Naive thymus-derived CD4-positive, alpha-beta T cell (primary cell): ENCODE measurements at regions of chr6 and their contacts with region 1.

Region 1: GRCh38 chr6:37257634-37258404 is at the starts of genes TBC1D22B and TMEM217:
- DNase-seq: peak; percentile 85 to 94 (median 93)
- ATAC-seq: peak; percentile 100
- H3K4me3 ChIP-seq: peak within 1 kb of the TSS; percentile 92
- H3K4me3 Mint-ChIP-seq: peak within 1 kb of the TSS; percentile 80 to 99 (median 90)
- H3K27ac ChIP-seq: peak within 1 kb of the TSS; percentile 87
- H3K27ac Mint-ChIP-seq: peak within 1 kb of the TSS; percentile 71 to 95 (median 88)
- H3K4me1 ChIP-seq: peaks cover 18 to 21% of the 10 kb centered on the region in 2 donors
- H3K4me1 Mint-ChIP-seq: peaks cover 30 to 58% (median 45%) of the 10 kb centered on the region in 7 donors
- H3K27me3 ChIP-seq: no peaks in the 10 kb centered on the region
- H3K27me3 Mint-ChIP-seq: no peaks in the 10 kb centered on the region
- total RNA-seq, gene TBC1D22B: 8.3 to 23.5 (median 9.5) TPM
- total RNA-seq, gene TMEM217: 0.78 to 2.8 (median 1.6) TPM in 3 of 5 experiments, not detected in the others

Region 2: DNA sequence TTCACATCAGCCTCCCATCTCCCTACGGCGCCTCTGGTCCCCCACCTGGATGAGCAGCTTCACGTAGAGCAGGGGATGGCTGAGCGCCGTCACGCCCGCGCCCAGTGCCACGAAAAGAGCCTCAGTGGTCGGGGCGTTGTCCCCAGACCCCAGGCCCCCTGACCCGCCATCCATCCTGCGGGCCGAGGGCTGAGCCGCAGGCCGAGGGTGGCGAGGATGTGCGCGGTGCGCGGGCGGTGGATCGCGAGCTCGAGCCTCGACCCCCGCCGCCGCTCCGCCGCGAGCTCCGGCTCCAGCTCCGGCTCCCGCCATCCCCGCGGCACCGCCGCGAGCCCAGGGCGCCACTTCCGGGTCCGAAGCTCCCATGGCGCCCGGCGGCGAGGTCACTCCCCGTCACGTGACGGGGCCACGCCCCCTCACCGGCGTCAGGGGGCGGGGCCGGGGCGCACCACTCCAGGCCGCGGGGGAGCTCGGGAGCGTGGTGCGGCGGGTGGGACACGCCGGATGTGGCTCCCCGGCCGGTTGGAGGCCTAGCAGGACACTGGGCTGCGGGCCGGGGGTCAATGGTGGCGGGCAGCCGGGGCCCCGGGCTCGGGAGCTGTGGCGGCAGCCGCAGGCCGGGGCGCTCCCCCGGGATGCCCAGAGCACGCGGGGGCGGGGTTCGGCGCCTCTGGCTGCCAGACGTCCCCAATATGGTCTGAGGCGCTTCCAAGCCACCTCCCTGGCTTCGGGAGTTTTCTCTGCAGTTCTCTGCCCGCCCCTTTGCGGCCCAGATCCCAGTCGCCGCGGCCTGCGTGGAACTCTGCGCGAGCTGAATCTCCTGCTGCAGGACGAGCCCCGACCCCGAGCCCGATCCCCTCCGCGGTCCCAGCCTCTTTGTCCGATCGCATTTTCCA is 271.8 kb before region 1 on chr6 and contains the start of gene MTCH1:
- CTCF ChIA-PET with region 1: no interaction called
- POLR2A ChIA-PET with region 1: interaction called, 8 read pairs
- intact Hi-C with region 1: loop called in 1 of 2 experiments (anchors 1 kb)
- DNase-seq: peak; percentile 85 to 98 (median 92)
- ATAC-seq: peak; percentile 93
- H3K4me3 ChIP-seq: peak within 1 kb of the TSS; percentile 98
- H3K4me3 Mint-ChIP-seq: peak within 1 kb of the TSS in 6 of 10 donors; percentile 98 to 100 (median 100)
- H3K27ac ChIP-seq: peak within 1 kb of the TSS; percentile 96
- H3K27ac Mint-ChIP-seq: peak within 1 kb of the TSS in 7 of 9 donors; percentile 98 to 99 (median 99)
- H3K4me1 ChIP-seq: peaks cover 22 to 27% of the 10 kb centered on the region in 2 donors
- H3K4me1 Mint-ChIP-seq: peaks cover 12 to 26% (median 18%) of the 10 kb centered on the region in 7 donors
- H3K27me3 ChIP-seq: no peaks in the 10 kb centered on the region
- H3K27me3 Mint-ChIP-seq: peaks cover 0 to 17% (median 0%) of the 10 kb centered on the region in 5 donors
- total RNA-seq, gene MTCH1: 123 to 198 (median 130) TPM

Region 3: GRCh38 chr6:36997811-36998722 is 259.8 kb before region 1 on chr6:
- CTCF ChIA-PET with region 1: no interaction called
- POLR2A ChIA-PET with region 1: no interaction called
- intact Hi-C with region 1: no loop called
- DNase-seq: no peak
- ATAC-seq: no peak
- H3K4me3 ChIP-seq: no peak overlapping the region
- H3K4me3 Mint-ChIP-seq: no peak overlapping the region
- H3K27ac ChIP-seq: no peak overlapping the region
- H3K27ac Mint-ChIP-seq: no peak overlapping the region
- H3K4me1 ChIP-seq: no peaks in the 10 kb centered on the region
- H3K4me1 Mint-ChIP-seq: peaks cover 0 to 5% (median 0%) of the 10 kb centered on the region in 7 donors
- H3K27me3 ChIP-seq: no peaks in the 10 kb centered on the region
- H3K27me3 Mint-ChIP-seq: peaks cover 0 to 29% (median 2%) of the 10 kb centered on the region in 5 donors

Region 4: DNA sequence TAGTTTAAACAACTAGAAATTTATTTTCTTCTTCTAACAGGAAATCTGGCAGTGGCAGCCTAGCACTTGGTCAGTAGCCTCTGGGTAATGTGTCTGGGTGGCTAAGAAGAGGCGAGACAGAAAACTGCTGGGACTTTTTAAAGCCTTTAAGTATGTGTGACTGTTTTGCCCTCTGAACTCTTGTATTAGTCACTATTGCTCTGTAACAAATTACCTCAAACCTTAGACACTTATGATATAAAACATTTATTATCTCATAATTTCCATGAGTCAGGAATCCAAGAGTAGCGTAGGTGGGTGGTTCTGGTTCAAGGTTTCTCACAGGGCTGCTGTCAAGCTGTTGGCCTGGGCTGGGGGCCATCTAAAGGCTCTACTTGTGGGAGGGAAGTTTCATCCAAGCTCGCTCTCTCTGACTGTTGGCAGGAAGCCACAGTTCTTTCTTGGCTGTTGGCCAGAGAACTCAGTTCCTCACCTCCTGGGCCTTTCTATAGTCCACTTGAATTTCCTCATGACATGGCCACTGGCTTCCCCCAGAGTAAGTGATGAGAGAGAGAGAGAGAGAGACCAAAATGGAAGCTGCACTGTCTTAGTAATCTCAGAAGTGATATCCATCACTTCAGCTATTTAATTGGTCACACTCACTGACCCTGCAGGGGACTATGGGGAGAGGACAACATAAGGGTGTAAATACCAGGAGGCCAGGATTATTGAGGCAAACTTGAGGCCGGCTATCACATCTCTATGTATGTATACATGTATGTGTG is 17.7 kb before region 1 on chr6:
- CTCF ChIA-PET with region 1: no interaction called
- POLR2A ChIA-PET with region 1: interaction called, 6 read pairs
- intact Hi-C with region 1: loop called in 1 of 2 experiments (anchors 1 kb)
- DNase-seq: peak in 8 of 9 donors; percentile 22 to 73 (median 39)
- ATAC-seq: peak; percentile 77
- H3K4me3 ChIP-seq: no peak overlapping the region
- H3K4me3 Mint-ChIP-seq: peak overlapping the region in 1 of 10 donors; percentile 7
- H3K27ac ChIP-seq: no peak overlapping the region
- H3K27ac Mint-ChIP-seq: peak overlapping the region in 8 of 9 donors; percentile 22 to 80 (median 54)
- H3K4me1 ChIP-seq: peaks cover 0 to 10% of the 10 kb centered on the region in 2 donors
- H3K4me1 Mint-ChIP-seq: peaks cover 8 to 31% (median 11%) of the 10 kb centered on the region in 7 donors
- H3K27me3 ChIP-seq: no peaks in the 10 kb centered on the region
- H3K27me3 Mint-ChIP-seq: no peaks in the 10 kb centered on the region

Region 5: DNA sequence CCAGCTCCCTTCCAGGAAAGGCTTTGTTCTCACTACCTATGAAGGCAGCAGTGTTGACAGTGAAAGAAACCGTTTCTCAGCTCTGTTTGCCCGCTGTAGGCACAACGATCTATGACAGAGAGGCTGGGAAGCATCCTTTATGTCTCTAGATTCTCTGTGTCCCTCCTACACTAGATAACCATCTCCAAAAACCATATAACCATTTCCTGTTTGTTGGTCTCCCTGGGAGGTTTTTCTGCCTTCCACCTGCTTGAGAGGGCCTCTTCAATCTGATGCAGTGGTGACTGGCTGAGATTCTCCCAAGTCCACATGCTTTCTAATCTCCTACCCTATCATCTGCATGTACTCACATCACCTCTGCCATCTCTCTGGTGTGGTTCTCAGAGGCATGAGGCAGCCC is 32.1 kb after region 1 on chr6:
- CTCF ChIA-PET with region 1: no interaction called
- POLR2A ChIA-PET with region 1: no interaction called
- intact Hi-C with region 1: loop called in 1 of 2 experiments (anchors 1 kb)
- DNase-seq: peak in 8 of 9 donors; percentile 27 to 63 (median 48)
- ATAC-seq: peak; percentile 81
- H3K4me3 ChIP-seq: no peak overlapping the region
- H3K4me3 Mint-ChIP-seq: peak overlapping the region in 8 of 10 donors; percentile 0 to 75 (median 24)
- H3K27ac ChIP-seq: peak overlapping the region; percentile 18
- H3K27ac Mint-ChIP-seq: peak overlapping the region; percentile 49 to 94 (median 77)
- H3K4me1 ChIP-seq: peaks cover 12 to 14% of the 10 kb centered on the region in 2 donors
- H3K4me1 Mint-ChIP-seq: peaks cover 18 to 57% (median 22%) of the 10 kb centered on the region in 7 donors
- H3K27me3 ChIP-seq: no peaks in the 10 kb centered on the region
- H3K27me3 Mint-ChIP-seq: no peaks in the 10 kb centered on the region

Region 6: DNA sequence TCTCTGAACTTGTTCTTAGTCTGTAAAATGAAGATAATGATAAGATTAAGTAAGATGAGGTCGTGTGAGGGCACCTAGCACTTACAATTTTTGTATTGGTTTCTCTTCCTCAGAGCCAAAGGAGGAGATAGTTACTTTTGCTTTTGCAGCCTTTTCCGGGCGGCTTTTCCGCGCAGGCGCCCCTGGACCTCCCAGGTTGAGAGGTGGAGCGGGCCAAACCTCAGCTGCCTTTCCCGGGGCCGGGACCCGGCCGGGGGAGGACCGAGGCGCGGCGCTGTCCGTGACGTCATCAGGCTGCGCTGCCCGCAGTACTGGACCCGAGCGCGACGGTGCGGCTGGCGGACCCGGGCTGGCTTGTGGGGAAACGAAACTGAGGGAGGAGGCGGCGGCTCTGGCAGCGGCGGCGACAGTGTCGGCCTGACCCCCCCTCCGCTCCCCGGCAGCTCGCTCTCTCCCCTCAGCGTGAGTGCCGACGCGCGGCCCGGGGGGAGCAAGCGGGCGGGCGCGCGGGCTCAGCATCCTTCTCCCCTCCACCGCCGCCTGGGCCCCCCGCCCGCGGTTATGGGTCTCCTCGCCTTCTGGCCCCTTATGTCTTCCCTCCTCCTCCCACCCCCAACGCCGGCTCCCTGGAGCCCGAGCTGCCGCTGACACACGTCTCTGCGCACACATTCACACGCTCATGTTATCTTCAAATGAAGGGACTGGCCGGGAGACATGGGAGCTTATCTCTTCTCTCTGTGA is 175.3 kb after region 1 on chr6 and contains the start of gene CMTR1:
- CTCF ChIA-PET with region 1: no interaction called
- POLR2A ChIA-PET with region 1: no interaction called
- intact Hi-C with region 1: loop called in 1 of 2 experiments (anchors 5 kb)
- DNase-seq: peak; percentile 94 to 99 (median 95)
- ATAC-seq: peak; percentile 96
- H3K4me3 ChIP-seq: peak within 1 kb of the TSS; percentile 64
- H3K4me3 Mint-ChIP-seq: peak within 1 kb of the TSS; percentile 83 to 96 (median 94)
- H3K27ac ChIP-seq: peak within 1 kb of the TSS; percentile 94
- H3K27ac Mint-ChIP-seq: peak within 1 kb of the TSS; percentile 92 to 97 (median 96)
- H3K4me1 ChIP-seq: peaks cover 12 to 25% of the 10 kb centered on the region in 2 donors
- H3K4me1 Mint-ChIP-seq: peaks cover 24 to 55% (median 47%) of the 10 kb centered on the region in 7 donors
- H3K27me3 ChIP-seq: no peaks in the 10 kb centered on the region
- H3K27me3 Mint-ChIP-seq: peaks cover 2 to 9% (median 8%) of the 10 kb centered on the region in 5 donors
- total RNA-seq, gene CMTR1: 70.0 to 89.4 (median 71.8) TPM